Right lobe of liver (tissue), 6 donors: ENCODE measurements at regions of chr11 and their contacts with region 1.

Region 1: GRCh38 chr11:121575250-121575962 is 122.6 kb upstream of the SORL1-AS1 start:
- DNase-seq: peak; percentile 89 to 93 (median 92)
- ATAC-seq: peak; percentile 88 to 97 (median 92)
- H3K4me3 ChIP-seq: no peak overlapping the region
- H3K27ac ChIP-seq: peak overlapping the region; percentile 65 to 77 (median 69)
- H3K4me1 ChIP-seq: peaks cover 0 to 21% (median 10%) of the 10 kb centered on the region in 4 donors
- H3K27me3 ChIP-seq: no peaks in the 10 kb centered on the region
- CTCF ChIP-seq: no peak
- POLR2A ChIP-seq: peak; percentile 60

Region 2: GRCh38 chr11:121451986-121452608 is 123.3 kb before region 1 on chr11 and contains the start of gene SORL1:
- intact Hi-C with region 1: loop called in 1 of 2 experiments (anchors 10 kb)
- DNase-seq: peak; percentile 86 to 89 (median 87)
- ATAC-seq: peak; percentile 63 to 82 (median 70)
- H3K4me3 ChIP-seq: peak within 1 kb of the TSS; percentile 73 to 94 (median 93)
- H3K27ac ChIP-seq: peak within 1 kb of the TSS; percentile 89 to 97 (median 95)
- H3K4me1 ChIP-seq: peaks cover 0 to 65% (median 17%) of the 10 kb centered on the region in 4 donors
- H3K27me3 ChIP-seq: no peaks in the 10 kb centered on the region
- CTCF ChIP-seq: peak; percentile 45 to 77 (median 58)
- POLR2A ChIP-seq: peak; percentile 71
- total RNA-seq, gene SORL1: 45.2 to 137 (median 73.8) TPM

Region 3: GRCh38 chr11:121696177-121696871 is 120.9 kb after region 1 on chr11:
- intact Hi-C with region 1: no loop called
- DNase-seq: no peak
- ATAC-seq: no peak
- H3K4me3 ChIP-seq: no peak overlapping the region
- H3K27ac ChIP-seq: no peak overlapping the region
- H3K4me1 ChIP-seq: no peaks in the 10 kb centered on the region
- H3K27me3 ChIP-seq: no peaks in the 10 kb centered on the region
- CTCF ChIP-seq: no peak
- POLR2A ChIP-seq: no peak